SK-N-SH (cell line): ENCODE measurements at regions of chr15 and their contacts with region 1.

Region 1: DNA sequence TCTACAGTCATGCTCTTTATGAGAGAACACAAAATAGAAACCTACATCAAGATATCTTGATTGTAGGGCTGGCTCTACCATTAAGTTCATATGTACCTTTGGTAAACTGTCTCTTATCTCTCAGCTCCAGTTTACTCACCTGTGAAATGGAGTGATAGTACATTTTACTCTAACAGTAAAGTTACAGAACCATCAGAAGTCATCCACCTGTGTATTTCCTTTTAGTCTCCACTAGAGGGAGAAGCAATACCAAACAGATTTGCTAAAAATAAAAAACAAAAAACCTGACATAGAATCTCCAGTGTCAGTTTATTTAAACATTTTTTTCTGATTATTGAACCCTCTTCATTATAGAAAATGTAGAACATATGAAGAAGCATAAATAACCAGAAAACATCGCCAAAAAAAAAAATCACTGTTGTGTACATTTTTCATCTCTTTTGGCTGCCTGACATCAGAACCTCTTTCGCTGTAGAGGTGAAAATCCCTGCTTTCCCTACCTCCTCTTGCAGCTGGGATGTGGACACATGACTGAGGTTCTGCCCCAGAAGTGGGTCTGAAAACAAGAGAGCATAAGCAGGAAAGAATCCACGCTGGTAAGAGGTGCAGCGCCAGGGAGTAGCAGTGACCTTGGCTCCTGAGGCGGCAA is 48.7 kb upstream of the WDR72 start:
- DNase-seq: peak; percentile 12
- H3K4me3 ChIP-seq: peak overlapping the region in 1 of 2 experiments; percentile 11; a peak in 1 of 4 replicates
- H3K27ac ChIP-seq: no peak overlapping the region
- H3K4me1 ChIP-seq: no peaks in the 10 kb centered on the region
- H3K27me3 ChIP-seq: no peaks in the 10 kb centered on the region
- CTCF ChIP-seq: peak; percentile 67
- EP300 ChIP-seq: no peak
- RAD21 ChIP-seq: peak; percentile 72

Region 2: GRCh38 chr15:53831907-53832770 is 24.0 kb after region 1 on chr15:
- CTCF ChIA-PET with region 1: interaction called, 11 read pairs
- POLR2A ChIA-PET with region 1: no interaction called
- DNase-seq: no peak
- H3K4me3 ChIP-seq: no peak overlapping the region
- H3K27ac ChIP-seq: peak overlapping the region in 1 of 2 experiments; percentile 99; a peak in 2 of 4 replicates
- H3K4me1 ChIP-seq: peaks cover 0 to 29% of the 10 kb centered on the region in 2 experiments; a peak in 2 of 4 replicates
- H3K27me3 ChIP-seq: no peaks in the 10 kb centered on the region
- CTCF ChIP-seq: no peak
- EP300 ChIP-seq: no peak
- RAD21 ChIP-seq: no peak

Region 3: GRCh38 chr15:53955396-53955795 is 147.2 kb after region 1 on chr15:
- CTCF ChIA-PET with region 1: interaction called, 11 read pairs
- POLR2A ChIA-PET with region 1: no interaction called
- DNase-seq: no peak
- H3K4me3 ChIP-seq: no peak overlapping the region
- H3K27ac ChIP-seq: no peak overlapping the region
- H3K4me1 ChIP-seq: peaks cover 0 to 5% of the 10 kb centered on the region in 2 experiments; a peak in 2 of 4 replicates
- H3K27me3 ChIP-seq: no peaks in the 10 kb centered on the region
- CTCF ChIP-seq: no peak
- EP300 ChIP-seq: no peak
- RAD21 ChIP-seq: no peak

Region 4: DNA sequence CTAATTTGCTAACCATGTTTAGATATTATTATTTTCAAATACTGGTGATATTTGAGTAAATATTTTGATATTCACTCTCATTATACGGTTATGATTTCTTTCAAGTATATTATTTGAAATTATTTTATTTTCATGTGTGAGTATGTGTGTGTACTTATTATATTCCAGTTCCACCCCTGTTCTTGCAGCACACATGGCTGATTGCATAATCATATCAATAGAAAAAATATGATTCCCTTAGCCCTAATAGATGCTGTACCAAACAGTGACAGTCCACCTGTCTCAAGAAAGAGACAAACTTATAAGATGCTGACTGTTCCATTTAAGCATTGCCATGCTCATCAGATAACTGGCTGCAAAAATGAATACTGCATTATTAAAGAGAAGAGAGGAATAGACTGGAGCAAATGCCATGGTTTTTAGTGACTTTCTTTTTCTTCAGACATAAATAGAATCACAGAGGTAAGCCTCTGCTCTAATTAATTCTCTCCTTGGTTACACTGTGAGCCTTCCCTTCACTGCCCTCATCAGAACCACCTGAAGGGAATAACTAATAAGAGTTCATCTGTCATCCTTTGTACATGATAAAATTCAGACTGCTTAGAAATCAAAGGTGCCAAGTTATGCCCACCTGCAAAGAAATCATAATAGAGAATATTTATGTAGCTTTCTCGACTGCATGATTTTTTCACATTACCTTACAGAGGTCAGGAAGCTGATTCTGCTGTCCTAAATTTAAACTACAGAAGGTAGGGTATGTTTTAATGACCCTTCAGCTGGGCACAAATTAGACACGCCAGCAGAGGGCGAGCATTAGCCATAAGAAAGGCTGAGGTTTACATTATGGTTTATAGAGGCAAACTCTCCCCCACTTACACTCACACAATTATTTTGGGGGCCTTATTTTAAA is 154.4 kb after region 1 on chr15:
- CTCF ChIA-PET with region 1: interaction called, 18 read pairs
- POLR2A ChIA-PET with region 1: no interaction called
- DNase-seq: peak; percentile 8
- H3K4me3 ChIP-seq: no peak overlapping the region
- H3K27ac ChIP-seq: no peak overlapping the region
- H3K4me1 ChIP-seq: no peaks in the 10 kb centered on the region
- H3K27me3 ChIP-seq: no peaks in the 10 kb centered on the region
- CTCF ChIP-seq: peak; percentile 65
- EP300 ChIP-seq: no peak
- RAD21 ChIP-seq: peak; percentile 70

Region 5: GRCh38 chr15:54082836-54083492 is 274.8 kb after region 1 on chr15:
- CTCF ChIA-PET with region 1: interaction called, 10 read pairs
- POLR2A ChIA-PET with region 1: no interaction called
- DNase-seq: peak; percentile 48
- H3K4me3 ChIP-seq: no peak overlapping the region
- H3K27ac ChIP-seq: no peak overlapping the region
- H3K4me1 ChIP-seq: no peaks in the 10 kb centered on the region
- H3K27me3 ChIP-seq: no peaks in the 10 kb centered on the region
- CTCF ChIP-seq: peak; percentile 80
- EP300 ChIP-seq: no peak
- RAD21 ChIP-seq: peak; percentile 61